Activated CD4-positive, alpha-beta memory T cell treated with anti-CD3 and anti-CD28 coated beads, Interleukin-2, amount 10 ng/mL, durations not matched to agents 7 days and 5 days (primary cell): ENCODE measurements at regions of chr6 and their contacts with region 1.

Region 1: GRCh38 chr6:45586216-45587171 is 208.8 kb upstream of the SUPT3H start:
- DNase-seq: peak; percentile 81
- H3K4me3 Mint-ChIP-seq: peak overlapping the region; percentile 54
- H3K27ac Mint-ChIP-seq: peak overlapping the region; percentile 94
- H3K4me1 Mint-ChIP-seq: peaks cover 77% of the 10 kb centered on the region
- H3K27me3 Mint-ChIP-seq: no peaks in the 10 kb centered on the region

Region 2: GRCh38 chr6:45574885-45575284 is 11.6 kb before region 1 on chr6:
- CTCF ChIA-PET with region 1: interaction called, 11 read pairs
- POLR2A ChIA-PET with region 1: interaction called, 29 read pairs
- DNase-seq: no peak
- H3K4me3 Mint-ChIP-seq: no peak overlapping the region
- H3K27ac Mint-ChIP-seq: no peak overlapping the region
- H3K4me1 Mint-ChIP-seq: peaks cover 34% of the 10 kb centered on the region
- H3K27me3 Mint-ChIP-seq: no peaks in the 10 kb centered on the region

Region 3: DNA sequence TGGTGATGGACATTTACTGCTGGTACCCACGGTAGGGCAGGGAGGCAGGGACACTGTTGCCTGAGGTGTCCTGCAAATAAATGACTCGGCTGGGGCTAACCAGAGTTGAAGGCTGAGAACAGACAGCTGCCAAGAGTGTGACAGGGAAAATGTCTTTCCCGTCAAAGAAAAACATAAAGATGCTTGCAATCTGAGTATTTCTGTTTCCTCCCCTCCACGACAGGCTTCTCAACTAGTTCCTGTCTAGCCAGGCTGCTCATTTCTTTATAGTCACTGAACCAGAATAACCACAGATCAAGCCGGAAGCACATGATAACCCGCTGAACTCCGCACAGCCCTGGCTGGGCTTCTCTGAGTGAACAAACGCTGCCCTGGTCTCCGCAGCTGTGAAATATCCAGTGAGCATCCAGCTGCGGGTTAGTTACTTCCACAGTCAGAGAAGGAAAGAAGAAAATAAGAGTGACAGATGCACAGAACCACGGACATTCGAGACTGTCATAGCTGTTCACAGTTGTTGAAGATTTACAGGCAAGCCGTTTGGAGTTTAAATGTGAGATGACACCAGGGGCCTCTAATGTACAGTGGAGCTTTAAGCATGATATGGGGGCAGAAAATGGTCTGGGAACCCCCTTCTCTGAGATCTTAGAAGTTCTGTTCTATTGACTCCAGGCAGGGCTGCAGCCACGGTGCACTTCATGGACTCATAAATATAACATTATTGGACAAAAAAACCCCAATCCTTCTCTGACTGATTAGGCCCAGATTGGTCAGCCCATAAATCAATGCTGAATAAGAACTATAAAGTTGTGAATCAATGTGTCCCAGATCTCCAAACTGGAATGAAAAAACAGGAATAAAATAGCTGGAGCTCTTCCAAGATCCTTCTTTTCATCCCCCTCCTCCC is 91.1 kb after region 1 on chr6:
- CTCF ChIA-PET with region 1: interaction called, 3 read pairs
- POLR2A ChIA-PET with region 1: interaction called, 10 read pairs
- DNase-seq: peak; percentile 74
- H3K4me3 Mint-ChIP-seq: peak overlapping the region; percentile 52
- H3K27ac Mint-ChIP-seq: peak overlapping the region; percentile 70
- H3K4me1 Mint-ChIP-seq: peaks cover 53% of the 10 kb centered on the region
- H3K27me3 Mint-ChIP-seq: peaks cover 1% of the 10 kb centered on the region